Left ventricle myocardium superior (tissue), 1 donor: ENCODE measurements at regions of chr15 and their contacts with region 1.

Region 1: DNA sequence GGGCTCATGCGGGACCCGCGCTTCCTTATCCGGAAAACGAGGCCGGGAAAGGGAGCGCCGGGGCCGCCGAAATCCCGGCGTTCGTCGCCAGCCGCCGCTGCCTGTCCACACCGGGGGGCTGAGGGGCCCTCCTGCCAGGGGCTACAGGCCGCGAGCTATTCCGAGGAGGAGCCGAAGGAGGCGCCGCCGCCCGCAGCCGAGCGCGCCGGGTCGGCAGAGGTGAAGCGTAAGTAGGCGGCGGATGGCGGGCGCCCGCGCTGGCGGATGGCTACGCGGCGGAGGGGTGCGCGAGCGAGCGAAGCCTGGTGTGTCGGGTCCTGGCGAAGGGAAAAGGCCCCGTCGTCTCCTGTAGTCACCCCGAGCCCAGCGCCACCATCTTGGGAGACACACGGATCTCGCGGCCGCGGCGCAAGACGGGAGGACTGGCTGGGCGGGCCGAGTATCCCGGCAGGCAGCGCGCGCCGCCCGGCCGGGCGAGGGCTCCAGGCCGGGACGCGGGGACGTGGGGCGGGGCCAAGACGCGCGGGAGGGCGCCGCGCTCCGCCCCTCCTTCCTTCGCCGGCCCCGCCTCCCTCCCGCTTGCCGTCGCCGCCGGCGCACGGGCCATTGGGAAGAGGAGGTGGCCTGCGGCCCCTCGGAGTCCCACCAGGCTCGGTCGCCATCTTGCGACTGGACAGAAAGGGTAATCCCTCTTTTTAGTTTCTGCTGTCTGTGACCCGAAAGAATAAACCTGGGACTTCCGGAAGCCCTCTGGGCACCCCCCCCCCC is at the start of gene UBE3A:
- DNase-seq: peak; percentile 96
- ATAC-seq: peak; percentile 99
- total RNA-seq, gene UBE3A: 103 TPM

Region 2: DNA sequence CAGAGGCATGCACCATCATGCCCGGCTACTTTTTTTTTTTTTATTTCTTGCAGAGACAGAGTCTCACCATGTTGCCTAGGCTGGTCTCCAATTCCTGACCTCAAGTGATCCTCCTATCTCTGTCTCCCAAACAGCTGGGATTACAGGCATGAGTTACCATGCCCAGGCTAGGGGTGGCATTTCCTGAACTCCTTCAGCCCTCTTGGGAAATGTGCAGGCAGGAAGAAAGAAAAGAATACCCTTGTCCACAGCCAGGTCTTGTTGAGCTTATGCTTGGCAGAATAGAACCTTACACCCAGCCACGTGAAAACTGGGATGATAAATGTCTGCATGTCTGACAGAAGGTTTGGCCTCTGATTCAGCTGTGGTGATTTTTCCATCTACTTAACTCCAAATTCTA is 514.2 kb before region 1 on chr15:
- intact Hi-C with region 1: no loop called
- DNase-seq: no peak
- ATAC-seq: peak; percentile 62

Region 3: GRCh38 chr15:25339431-25339830 is 99.4 kb before region 1 on chr15:
- intact Hi-C with region 1: loop called (anchors 5 kb)
- DNase-seq: no peak
- ATAC-seq: no peak

Region 4: DNA sequence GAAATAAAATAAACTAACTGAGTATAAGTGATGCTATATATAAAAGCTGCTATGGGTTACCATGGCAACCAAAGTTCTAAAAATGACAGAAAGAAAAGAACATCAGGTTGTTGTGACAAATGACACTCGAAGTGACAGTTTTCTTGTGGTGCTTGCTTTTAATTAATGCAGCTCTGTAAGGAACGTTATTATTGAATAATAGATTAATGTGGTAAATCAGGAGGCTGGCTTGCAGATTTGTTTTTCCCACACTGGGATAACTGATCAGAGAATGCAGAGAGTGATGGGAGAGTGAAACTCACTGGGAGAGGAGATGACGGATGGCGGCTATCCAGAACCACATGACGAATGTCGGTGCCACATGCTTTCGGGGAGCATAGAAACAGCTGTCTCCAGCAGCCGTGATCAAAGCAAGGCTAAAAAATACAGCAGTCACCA is 631.3 kb after region 1 on chr15:
- intact Hi-C with region 1: no loop called
- DNase-seq: no peak
- ATAC-seq: no peak